Caco-2 (cell line): ENCODE measurements at regions of chr16 and their contacts with region 1.

Region 1: DNA sequence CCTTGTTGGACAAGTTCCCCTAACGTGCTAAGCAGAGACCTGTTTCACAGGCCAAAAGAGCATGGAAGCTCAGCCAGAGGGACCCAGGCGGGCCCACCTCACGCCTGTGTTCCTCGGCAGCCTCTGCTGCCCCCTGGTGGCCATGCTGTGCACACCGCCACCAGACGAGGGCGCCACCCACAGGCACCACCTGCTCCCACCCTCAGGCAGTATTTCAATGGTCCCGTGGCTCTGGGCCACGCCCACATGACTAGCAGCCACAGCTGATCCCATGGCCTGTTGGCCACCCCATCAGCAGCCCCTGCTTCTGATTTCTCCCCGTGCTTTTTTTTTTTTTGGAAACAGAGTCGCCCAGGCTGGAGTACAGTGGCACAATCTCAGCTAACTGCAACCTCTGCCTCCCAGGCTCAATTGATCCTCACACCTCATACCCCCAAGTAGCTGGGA is 18.9 kb downstream of the MPG start:
- DNase-seq: peak; percentile 81 to 91
- H3K4me3 ChIP-seq: no peak overlapping the region
- H3K4me3 Mint-ChIP-seq: no peak overlapping the region
- H3K27ac Mint-ChIP-seq: no peak overlapping the region
- H3K4me1 ChIP-seq: no peaks in the 10 kb centered on the region
- H3K4me1 Mint-ChIP-seq: no peaks in the 10 kb centered on the region
- H3K27me3 ChIP-seq: no peaks in the 10 kb centered on the region
- H3K27me3 Mint-ChIP-seq: no peaks in the 10 kb centered on the region
- CTCF ChIP-seq: peak; percentile 94 to 100

Region 2: GRCh38 chr16:38939-39892 is 57.7 kb before region 1 on chr16:
- CTCF ChIA-PET with region 1: no interaction called
- POLR2A ChIA-PET with region 1: no interaction called
- intact Hi-C with region 1: no loop called
- DNase-seq: no peak
- H3K4me3 ChIP-seq: no peak overlapping the region
- H3K4me3 Mint-ChIP-seq: no peak overlapping the region
- H3K27ac Mint-ChIP-seq: no peak overlapping the region
- H3K4me1 ChIP-seq: no peaks in the 10 kb centered on the region
- H3K4me1 Mint-ChIP-seq: no peaks in the 10 kb centered on the region
- H3K27me3 ChIP-seq: no peaks in the 10 kb centered on the region
- H3K27me3 Mint-ChIP-seq: no peaks in the 10 kb centered on the region
- CTCF ChIP-seq: no peak

Region 3: GRCh38 chr16:65671-66137 is 31.3 kb before region 1 on chr16:
- CTCF ChIA-PET with region 1: interaction called, 37 read pairs
- POLR2A ChIA-PET with region 1: no interaction called
- intact Hi-C with region 1: loop called (anchors 1 kb)
- DNase-seq: peak; percentile 67 to 83
- H3K4me3 ChIP-seq: no peak overlapping the region
- H3K4me3 Mint-ChIP-seq: no peak overlapping the region
- H3K27ac Mint-ChIP-seq: no peak overlapping the region
- H3K4me1 ChIP-seq: peaks cover 6% of the 10 kb centered on the region
- H3K4me1 Mint-ChIP-seq: no peaks in the 10 kb centered on the region
- H3K27me3 ChIP-seq: no peaks in the 10 kb centered on the region
- H3K27me3 Mint-ChIP-seq: no peaks in the 10 kb centered on the region
- CTCF ChIP-seq: peak; percentile 91 to 95

Region 4: GRCh38 chr16:72561-73548 is 24.1 kb before region 1 on chr16 and contains the start of gene RHBDF1:
- CTCF ChIA-PET with region 1: interaction called, 37 read pairs
- POLR2A ChIA-PET with region 1: interaction called, 5 read pairs
- intact Hi-C with region 1: no loop called
- DNase-seq: peak; percentile 61 to 80
- H3K4me3 ChIP-seq: peak within 1 kb of the TSS; percentile 58
- H3K4me3 Mint-ChIP-seq: peak within 1 kb of the TSS; percentile 88
- H3K27ac Mint-ChIP-seq: peak within 1 kb of the TSS; percentile 98
- H3K4me1 ChIP-seq: peaks cover 41% of the 10 kb centered on the region
- H3K4me1 Mint-ChIP-seq: peaks cover 7% of the 10 kb centered on the region
- H3K27me3 ChIP-seq: no peaks in the 10 kb centered on the region
- H3K27me3 Mint-ChIP-seq: no peaks in the 10 kb centered on the region
- CTCF ChIP-seq: no peak
- total RNA-seq, gene RHBDF1: 62.3 and 65.8 TPM in 2 replicates

Region 5: DNA sequence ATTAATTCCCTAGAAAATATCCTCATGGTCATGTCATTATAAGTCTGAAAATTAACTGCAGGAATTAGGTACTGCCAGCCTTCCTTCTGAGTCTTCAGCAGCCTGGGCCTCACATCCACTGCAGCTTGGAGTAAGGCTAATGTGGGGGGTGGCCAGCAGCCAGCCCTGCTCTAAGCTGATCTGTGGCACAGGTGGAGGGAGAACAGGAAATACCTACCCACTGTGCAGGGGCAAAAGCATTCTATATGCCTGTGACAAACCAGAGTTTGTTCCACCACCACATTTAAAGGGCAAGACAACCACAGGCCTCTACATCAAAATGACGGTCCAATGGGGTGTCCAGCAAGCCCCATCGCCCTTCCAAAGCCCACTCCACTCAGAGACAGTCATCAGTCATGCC is 32.1 kb after region 1 on chr16:
- CTCF ChIA-PET with region 1: no interaction called
- POLR2A ChIA-PET with region 1: no interaction called
- intact Hi-C with region 1: no loop called
- DNase-seq: no peak
- H3K4me3 ChIP-seq: no peak overlapping the region
- H3K4me3 Mint-ChIP-seq: no peak overlapping the region
- H3K27ac Mint-ChIP-seq: no peak overlapping the region
- H3K4me1 ChIP-seq: no peaks in the 10 kb centered on the region
- H3K4me1 Mint-ChIP-seq: no peaks in the 10 kb centered on the region
- H3K27me3 ChIP-seq: no peaks in the 10 kb centered on the region
- H3K27me3 Mint-ChIP-seq: no peaks in the 10 kb centered on the region
- CTCF ChIP-seq: no peak

Region 6: GRCh38 chr16:194516-194915 is 97.6 kb after region 1 on chr16:
- CTCF ChIA-PET with region 1: no interaction called
- POLR2A ChIA-PET with region 1: no interaction called
- intact Hi-C with region 1: no loop called
- DNase-seq: no peak
- H3K4me3 ChIP-seq: no peak overlapping the region
- H3K4me3 Mint-ChIP-seq: no peak overlapping the region
- H3K27ac Mint-ChIP-seq: no peak overlapping the region
- H3K4me1 ChIP-seq: no peaks in the 10 kb centered on the region
- H3K4me1 Mint-ChIP-seq: no peaks in the 10 kb centered on the region
- H3K27me3 ChIP-seq: no peaks in the 10 kb centered on the region
- H3K27me3 Mint-ChIP-seq: no peaks in the 10 kb centered on the region
- CTCF ChIP-seq: no peak